GM12878 (cell line): ENCODE measurements at regions of chr5 and their contacts with region 1.

Region 1: DNA sequence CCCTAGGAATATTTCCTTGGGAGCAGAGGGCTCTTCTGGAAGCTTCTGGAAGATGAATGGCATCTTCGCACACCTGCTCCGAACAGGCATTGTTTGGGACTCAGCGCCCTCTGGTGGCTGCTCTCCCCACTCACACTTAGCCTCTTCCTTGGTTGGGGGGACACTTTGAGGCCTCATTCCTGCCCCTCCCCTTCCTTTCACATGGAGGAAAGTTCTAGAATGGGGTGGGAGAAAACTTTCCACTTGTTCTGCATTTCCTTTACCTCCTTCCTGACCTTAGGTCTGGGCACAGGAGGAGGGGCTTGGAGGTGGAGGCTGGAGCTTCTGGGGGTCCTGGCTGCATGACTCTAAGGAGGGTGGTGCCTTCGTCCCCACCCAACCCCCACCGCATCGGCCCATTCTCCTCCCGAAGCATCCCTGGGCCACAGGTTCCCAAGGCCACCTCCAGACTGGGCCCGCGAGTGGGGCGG is 19.3 kb upstream of the SMIM32 start:
- DNase-seq: no peak
- ATAC-seq: peak; percentile 85
- H3K4me3 ChIP-seq: no peak overlapping the region
- H3K27ac ChIP-seq: no peak overlapping the region
- H3K4me1 ChIP-seq: no peaks in the 10 kb centered on the region
- H3K27me3 ChIP-seq: peaks cover 0 to 3% of the 10 kb centered on the region in 2 experiments; a peak in 2 of 4 replicates
- CTCF ChIP-seq: peak; percentile 81 to 87 (median 81)
- EP300 ChIP-seq: no peak
- POLR2A ChIP-seq: no peak
- RAD21 ChIP-seq: peak; percentile 79

Region 2: GRCh38 chr5:135887351-135887864 is 324.9 kb before region 1 on chr5:
- CTCF ChIA-PET with region 1: interaction called, 15 read pairs
- POLR2A ChIA-PET with region 1: no interaction called
- RAD21 ChIA-PET with region 1: interaction called, 3 read pairs
- SMC1A ChIA-PET with region 1: interaction called, 7 read pairs
- in situ Hi-C with region 1: loop called (anchors 5 kb)
- intact Hi-C with region 1: loop called (anchors 1 kb)
- DNase-seq: peak; percentile 25
- ATAC-seq: peak; percentile 98
- H3K4me3 ChIP-seq: no peak overlapping the region
- H3K27ac ChIP-seq: no peak overlapping the region
- H3K4me1 ChIP-seq: no peaks in the 10 kb centered on the region
- H3K27me3 ChIP-seq: no peaks in the 10 kb centered on the region
- CTCF ChIP-seq: peak; percentile 72 to 78 (median 74)
- EP300 ChIP-seq: no peak
- POLR2A ChIP-seq: no peak
- RAD21 ChIP-seq: peak; percentile 85

Region 3: GRCh38 chr5:135944967-135945560 is 267.2 kb before region 1 on chr5:
- CTCF ChIA-PET with region 1: interaction called, 19 read pairs
- POLR2A ChIA-PET with region 1: no interaction called
- RAD21 ChIA-PET with region 1: interaction called, 5 read pairs
- SMC1A ChIA-PET with region 1: interaction called, 16 read pairs
- in situ Hi-C with region 1: loop called (anchors 5 kb)
- intact Hi-C with region 1: loop called (anchors 2 kb)
- DNase-seq: no peak
- ATAC-seq: peak; percentile 70
- H3K4me3 ChIP-seq: no peak overlapping the region
- H3K27ac ChIP-seq: no peak overlapping the region
- H3K4me1 ChIP-seq: no peaks in the 10 kb centered on the region
- H3K27me3 ChIP-seq: no peaks in the 10 kb centered on the region; a peak in 2 of 4 replicates
- CTCF ChIP-seq: peak; percentile 60 to 77 (median 66)
- EP300 ChIP-seq: no peak
- POLR2A ChIP-seq: no peak
- RAD21 ChIP-seq: peak; percentile 74

Region 4: GRCh38 chr5:135977375-135977928 is 234.8 kb before region 1 on chr5:
- CTCF ChIA-PET with region 1: interaction called, 3 read pairs
- POLR2A ChIA-PET with region 1: no interaction called
- RAD21 ChIA-PET with region 1: no interaction called
- SMC1A ChIA-PET with region 1: interaction called, 4 read pairs
- in situ Hi-C with region 1: no loop called
- intact Hi-C with region 1: loop called (anchors 1 kb)
- DNase-seq: no peak
- ATAC-seq: peak; percentile 99
- H3K4me3 ChIP-seq: no peak overlapping the region
- H3K27ac ChIP-seq: no peak overlapping the region
- H3K4me1 ChIP-seq: no peaks in the 10 kb centered on the region
- H3K27me3 ChIP-seq: peaks cover 0 to 3% of the 10 kb centered on the region in 2 experiments; a peak in 2 of 4 replicates
- CTCF ChIP-seq: peak; percentile 71 to 94 (median 88)
- EP300 ChIP-seq: no peak
- POLR2A ChIP-seq: no peak
- RAD21 ChIP-seq: peak; percentile 58

Region 5: GRCh38 chr5:136222583-136223274 is 10.4 kb after region 1 on chr5:
- CTCF ChIA-PET with region 1: interaction called, 19 read pairs
- POLR2A ChIA-PET with region 1: no interaction called
- RAD21 ChIA-PET with region 1: interaction called, 3 read pairs
- SMC1A ChIA-PET with region 1: interaction called, 4 read pairs
- in situ Hi-C with region 1: no loop called
- intact Hi-C with region 1: no loop called
- DNase-seq: no peak
- ATAC-seq: peak; percentile 71
- H3K4me3 ChIP-seq: no peak overlapping the region
- H3K27ac ChIP-seq: no peak overlapping the region
- H3K4me1 ChIP-seq: no peaks in the 10 kb centered on the region
- H3K27me3 ChIP-seq: no peaks in the 10 kb centered on the region
- CTCF ChIP-seq: no peak
- EP300 ChIP-seq: no peak
- POLR2A ChIP-seq: no peak
- RAD21 ChIP-seq: no peak

Region 6: GRCh38 chr5:136232316-136232715 is 20.0 kb after region 1 on chr5:
- CTCF ChIA-PET with region 1: interaction called, 11 read pairs
- POLR2A ChIA-PET with region 1: no interaction called
- RAD21 ChIA-PET with region 1: no interaction called
- SMC1A ChIA-PET with region 1: interaction called, 8 read pairs
- in situ Hi-C with region 1: no loop called
- intact Hi-C with region 1: no loop called
- DNase-seq: peak; percentile 62
- ATAC-seq: peak; percentile 93
- H3K4me3 ChIP-seq: no peak overlapping the region
- H3K27ac ChIP-seq: no peak overlapping the region
- H3K4me1 ChIP-seq: no peaks in the 10 kb centered on the region; the same call in 1 of the 2 replicates
- H3K27me3 ChIP-seq: no peaks in the 10 kb centered on the region
- CTCF ChIP-seq: no peak
- EP300 ChIP-seq: peak; percentile 54 to 66; a peak in 1 of 4 replicates
- POLR2A ChIP-seq: no peak
- RAD21 ChIP-seq: no peak